Left cardiac atrium (tissue), 4 donors: ENCODE measurements at regions of chrX and their contacts with region 1.

Region 1: GRCh38 chrX:149962859-149963757 is 24.8 kb upstream of the EOLA2 start:
- DNase-seq: peak; percentile 53
- ATAC-seq: peak; percentile 87 to 94

Region 2: GRCh38 chrX:150074184-150074583 is 111.1 kb after region 1 on chrX:
- intact Hi-C with region 1: no loop called
- DNase-seq: no peak
- ATAC-seq: no peak

Region 3: DNA sequence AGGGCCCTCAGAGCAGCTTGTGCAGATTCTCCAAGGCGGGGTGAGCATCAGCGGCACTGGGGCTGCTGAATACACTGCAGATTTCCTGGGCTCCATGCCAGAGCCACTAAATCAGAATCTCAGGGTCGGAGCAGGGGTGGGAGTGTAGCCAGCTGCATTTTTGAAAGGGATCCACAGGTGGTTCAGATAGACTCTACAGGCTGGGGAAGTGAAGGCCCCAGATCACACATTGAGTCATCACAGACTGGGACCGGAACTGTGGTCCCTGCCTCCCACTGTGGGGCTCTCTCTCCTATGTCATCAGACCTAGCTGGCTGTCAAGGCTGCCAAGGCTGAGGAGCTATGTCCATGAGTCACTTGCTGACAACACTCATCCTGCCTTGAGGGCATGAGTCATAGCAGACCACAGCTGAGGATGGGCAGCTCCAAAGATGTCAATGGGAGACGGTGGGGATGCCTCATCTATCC is 237.7 kb after region 1 on chrX:
- intact Hi-C with region 1: loop called in 1 of 2 experiments (anchors 5 kb)
- DNase-seq: peak; percentile 69
- ATAC-seq: peak; percentile 55 to 98

Region 4: GRCh38 chrX:150486011-150486410 is 522.9 kb after region 1 on chrX:
- intact Hi-C with region 1: loop called in 1 of 2 experiments (anchors 5 kb)
- DNase-seq: peak; percentile 57
- ATAC-seq: peak; percentile 47 to 70